Spleen (tissue), 13 donors: ENCODE measurements at regions of chr2 and their contacts with region 1.

Region 1: GRCh38 chr2:162221064-162221463 is 22.2 kb downstream of the FAP start:
- DNase-seq: peak; percentile 89
- H3K4me3 ChIP-seq: no peak overlapping the region
- H3K27ac ChIP-seq: no peak overlapping the region
- H3K4me1 ChIP-seq: peaks cover 0 to 5% (median 0%) of the 10 kb centered on the region in 6 donors
- H3K27me3 ChIP-seq: no peaks in the 10 kb centered on the region
- CTCF ChIP-seq: peak; percentile 40 to 88 (median 84)
- POLR2A ChIP-seq: no peak

Region 2: GRCh38 chr2:162184821-162185446 is 36.1 kb before region 1 on chr2:
- intact Hi-C with region 1: no loop called
- DNase-seq: no peak
- H3K4me3 ChIP-seq: no peak overlapping the region
- H3K27ac ChIP-seq: no peak overlapping the region
- H3K4me1 ChIP-seq: no peaks in the 10 kb centered on the region
- H3K27me3 ChIP-seq: no peaks in the 10 kb centered on the region
- CTCF ChIP-seq: no peak
- POLR2A ChIP-seq: no peak

Region 3: DNA sequence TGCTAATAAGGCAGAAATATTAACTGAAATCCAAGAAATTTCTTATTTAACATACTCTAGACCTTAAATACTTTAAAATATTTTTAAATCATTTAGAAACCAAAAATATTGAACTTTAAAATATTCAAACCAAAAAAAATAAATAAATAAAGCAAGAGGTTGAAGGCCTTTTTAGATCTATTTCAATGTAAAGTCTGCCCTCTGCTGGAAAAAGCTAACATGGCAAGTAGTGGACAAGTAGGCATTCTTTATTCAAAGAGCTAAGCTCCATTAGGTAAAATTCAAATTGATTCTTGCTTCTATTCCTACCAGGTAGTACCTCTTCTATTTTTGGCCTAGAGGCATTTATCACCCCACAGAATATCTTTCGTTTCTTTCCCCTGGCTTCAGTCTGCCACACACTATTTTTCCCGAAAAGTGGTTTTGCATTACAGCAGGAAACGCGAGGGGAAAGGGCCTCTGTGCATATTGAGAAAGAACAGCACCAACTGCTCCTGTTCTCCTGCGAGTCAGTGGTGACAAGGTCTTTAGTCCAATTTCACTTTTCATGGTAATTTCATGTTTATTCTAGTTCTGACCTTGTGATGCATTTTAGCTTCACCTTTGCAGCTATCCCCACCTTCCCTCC is 77.0 kb after region 1 on chr2:
- intact Hi-C with region 1: loop called (anchors 5 kb)
- DNase-seq: no peak
- H3K4me3 ChIP-seq: no peak overlapping the region
- H3K27ac ChIP-seq: no peak overlapping the region
- H3K4me1 ChIP-seq: peaks cover 0 to 39% (median 5%) of the 10 kb centered on the region in 6 donors
- H3K27me3 ChIP-seq: no peaks in the 10 kb centered on the region
- CTCF ChIP-seq: peak; percentile 50 to 92 (median 85)
- POLR2A ChIP-seq: no peak

Region 4: GRCh38 chr2:162318328-162319180 is 97.5 kb after region 1 on chr2 and contains the start of gene IFIH1:
- intact Hi-C with region 1: no loop called
- DNase-seq: peak; percentile 91
- H3K4me3 ChIP-seq: peak within 1 kb of the TSS; percentile 55 to 96 (median 70)
- H3K27ac ChIP-seq: peak within 1 kb of the TSS; percentile 76 to 99 (median 94)
- H3K4me1 ChIP-seq: peaks cover 3 to 75% (median 61%) of the 10 kb centered on the region in 6 donors
- H3K27me3 ChIP-seq: no peaks in the 10 kb centered on the region
- CTCF ChIP-seq: peak in 4 of 11 experiments; percentile 14 to 45 (median 26)
- POLR2A ChIP-seq: peak in 1 of 3 donors; percentile 55
- total RNA-seq, gene IFIH1: 30.4 to 53.8 (median 44.7) TPM

Region 5: GRCh38 chr2:162749994-162750393 is 528.9 kb after region 1 on chr2:
- intact Hi-C with region 1: no loop called
- DNase-seq: no peak
- H3K4me3 ChIP-seq: no peak overlapping the region
- H3K27ac ChIP-seq: no peak overlapping the region
- H3K4me1 ChIP-seq: no peaks in the 10 kb centered on the region
- H3K27me3 ChIP-seq: no peaks in the 10 kb centered on the region
- CTCF ChIP-seq: no peak
- POLR2A ChIP-seq: no peak